ENCODE measurements at regions of chr3 and their contacts with region 1.

Region 1: GRCh38 chr3:36868614-36869436 is 76.0 kb downstream of the TRANK1 start:
- DNase-seq: peak; percentile 54
- ATAC-seq: peak; percentile 87
- H3K4me3 Mint-ChIP-seq: no peak overlapping the region
- H3K27ac Mint-ChIP-seq: no peak overlapping the region
- H3K4me1 Mint-ChIP-seq: peaks cover 6% of the 10 kb centered on the region
- H3K27me3 Mint-ChIP-seq: no peaks in the 10 kb centered on the region; the same call in 1 of the 2 replicates
- CTCF ChIP-seq: peak; percentile 72

Region 2: DNA sequence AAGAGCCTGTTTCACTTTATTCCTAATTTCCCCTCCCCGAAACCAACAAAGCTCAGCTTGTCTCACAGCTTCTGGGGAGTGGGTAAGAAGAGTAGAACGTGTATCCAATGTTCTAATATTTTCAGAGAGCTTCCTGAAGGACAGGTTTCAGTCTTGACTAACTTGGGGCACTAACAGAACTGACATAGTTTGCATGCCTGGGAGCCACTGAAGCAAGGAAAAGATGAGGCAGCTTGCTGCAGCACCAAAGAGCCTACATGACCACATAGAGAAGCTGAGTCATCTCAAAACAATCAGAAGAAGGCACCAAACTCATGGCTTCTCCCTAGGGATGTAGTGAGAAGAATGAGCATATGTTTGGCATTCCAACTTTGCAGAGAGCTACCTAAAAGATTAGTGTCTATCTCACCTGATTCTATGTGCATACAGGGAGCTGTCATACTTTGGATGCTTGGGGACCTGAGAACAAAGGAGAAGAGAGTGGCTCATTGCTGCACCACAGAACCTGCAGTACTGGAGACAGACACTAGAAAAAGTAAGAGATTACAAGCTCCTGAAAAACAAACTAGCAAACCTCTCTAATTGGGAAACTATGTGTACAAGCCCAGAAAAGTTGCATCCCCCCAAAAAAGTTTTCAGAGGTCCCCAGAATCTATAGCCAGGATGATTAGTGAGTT is 191.4 kb before region 1 on chr3:
- CTCF ChIA-PET with region 1: no interaction called
- POLR2A ChIA-PET with region 1: no interaction called
- DNase-seq: no peak
- ATAC-seq: peak; percentile 75
- H3K4me3 Mint-ChIP-seq: no peak overlapping the region
- H3K27ac Mint-ChIP-seq: no peak overlapping the region
- H3K4me1 Mint-ChIP-seq: peaks cover 8% of the 10 kb centered on the region; the same call in 1 of the 2 replicates
- H3K27me3 Mint-ChIP-seq: no peaks in the 10 kb centered on the region
- CTCF ChIP-seq: no peak

Region 3: GRCh38 chr3:36729204-36730056 is 139.4 kb before region 1 on chr3:
- CTCF ChIA-PET with region 1: interaction called, 14 read pairs
- POLR2A ChIA-PET with region 1: no interaction called
- DNase-seq: no peak
- ATAC-seq: peak; percentile 86
- H3K4me3 Mint-ChIP-seq: no peak overlapping the region
- H3K27ac Mint-ChIP-seq: no peak overlapping the region
- H3K4me1 Mint-ChIP-seq: no peaks in the 10 kb centered on the region
- H3K27me3 Mint-ChIP-seq: 0 out of 2 replicates have a peak, but pooled peaks cover 2% of the 10 kb centered on the region
- CTCF ChIP-seq: no peak; the same call in 1 of the 2 replicates

Region 4: DNA sequence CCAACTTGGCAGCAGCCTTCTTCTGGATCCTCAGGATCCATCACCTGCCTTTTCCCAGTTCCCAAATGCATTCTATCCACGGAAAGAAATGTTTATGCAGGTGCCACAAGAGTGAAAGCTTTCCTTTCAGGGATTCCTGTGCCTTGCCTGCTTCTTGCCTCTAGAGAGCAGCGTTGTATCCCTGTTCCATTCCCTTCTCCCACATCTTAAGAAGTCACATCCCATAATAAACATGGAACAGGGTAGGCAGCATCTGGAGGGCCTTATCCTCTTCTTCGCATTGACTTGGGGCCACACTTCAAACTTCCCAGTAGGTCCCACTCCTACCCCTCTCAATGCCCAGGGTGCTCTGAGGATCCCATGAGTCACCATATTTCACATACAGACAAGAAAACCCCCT is 31.7 kb before region 1 on chr3:
- CTCF ChIA-PET with region 1: interaction called, 24 read pairs
- POLR2A ChIA-PET with region 1: interaction called, 3 read pairs
- DNase-seq: no peak
- ATAC-seq: peak; percentile 90
- H3K4me3 Mint-ChIP-seq: no peak overlapping the region
- H3K27ac Mint-ChIP-seq: no peak overlapping the region
- H3K4me1 Mint-ChIP-seq: no peaks in the 10 kb centered on the region
- H3K27me3 Mint-ChIP-seq: no peaks in the 10 kb centered on the region
- CTCF ChIP-seq: no peak

Measured in WTC11 (cell line).